ENCODE measurements at regions of chr1 and their contacts with region 1.

Region 1: GRCh38 chr1:115717541-115717940 is 51.0 kb downstream of the CASQ2 start:
- DNase-seq: peak; percentile 62
- ATAC-seq: no peak
- H3K4me3 Mint-ChIP-seq: no peak overlapping the region
- H3K27ac Mint-ChIP-seq: no peak overlapping the region
- H3K4me1 Mint-ChIP-seq: no peaks in the 10 kb centered on the region
- H3K27me3 Mint-ChIP-seq: no peaks in the 10 kb centered on the region

Region 2: DNA sequence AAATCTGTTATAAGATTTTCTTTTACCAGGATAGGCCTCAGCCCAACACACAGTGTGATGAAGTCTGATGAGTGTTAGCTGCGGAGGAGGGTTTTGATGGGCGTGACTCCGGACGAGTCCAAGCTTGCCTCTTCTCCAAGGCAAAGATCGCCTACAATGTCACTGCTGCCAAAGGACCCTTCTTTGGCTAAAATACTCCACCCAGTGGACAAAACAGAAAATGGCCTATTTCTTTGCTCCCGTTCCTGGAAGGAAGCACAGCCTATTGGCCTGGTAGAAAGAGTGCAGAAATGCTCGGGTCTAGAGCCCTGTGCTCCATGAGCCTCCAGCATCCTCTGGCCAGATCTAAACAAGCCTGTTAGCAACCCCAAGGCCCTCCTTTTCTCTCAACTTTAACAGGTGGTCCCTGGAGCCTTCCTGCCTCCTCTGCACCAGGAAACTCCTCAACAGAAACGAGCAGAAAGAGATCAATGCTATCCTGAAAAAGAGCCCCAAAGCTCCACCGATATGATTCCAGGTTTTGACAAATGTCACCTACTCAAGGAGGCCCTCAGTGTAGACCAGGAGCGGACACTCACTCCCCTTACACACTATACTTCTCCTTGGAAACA is 54.4 kb after region 1 on chr1:
- CTCF ChIA-PET with region 1: interaction called, 5 read pairs
- POLR2A ChIA-PET with region 1: no interaction called
- intact Hi-C with region 1: loop called in 1 of 2 experiments (anchors 5 kb)
- DNase-seq: peak; percentile 19
- ATAC-seq: peak; percentile 53
- H3K4me3 Mint-ChIP-seq: no peak overlapping the region
- H3K27ac Mint-ChIP-seq: no peak overlapping the region
- H3K4me1 Mint-ChIP-seq: no peaks in the 10 kb centered on the region
- H3K27me3 Mint-ChIP-seq: peaks cover 5% of the 10 kb centered on the region

Region 3: DNA sequence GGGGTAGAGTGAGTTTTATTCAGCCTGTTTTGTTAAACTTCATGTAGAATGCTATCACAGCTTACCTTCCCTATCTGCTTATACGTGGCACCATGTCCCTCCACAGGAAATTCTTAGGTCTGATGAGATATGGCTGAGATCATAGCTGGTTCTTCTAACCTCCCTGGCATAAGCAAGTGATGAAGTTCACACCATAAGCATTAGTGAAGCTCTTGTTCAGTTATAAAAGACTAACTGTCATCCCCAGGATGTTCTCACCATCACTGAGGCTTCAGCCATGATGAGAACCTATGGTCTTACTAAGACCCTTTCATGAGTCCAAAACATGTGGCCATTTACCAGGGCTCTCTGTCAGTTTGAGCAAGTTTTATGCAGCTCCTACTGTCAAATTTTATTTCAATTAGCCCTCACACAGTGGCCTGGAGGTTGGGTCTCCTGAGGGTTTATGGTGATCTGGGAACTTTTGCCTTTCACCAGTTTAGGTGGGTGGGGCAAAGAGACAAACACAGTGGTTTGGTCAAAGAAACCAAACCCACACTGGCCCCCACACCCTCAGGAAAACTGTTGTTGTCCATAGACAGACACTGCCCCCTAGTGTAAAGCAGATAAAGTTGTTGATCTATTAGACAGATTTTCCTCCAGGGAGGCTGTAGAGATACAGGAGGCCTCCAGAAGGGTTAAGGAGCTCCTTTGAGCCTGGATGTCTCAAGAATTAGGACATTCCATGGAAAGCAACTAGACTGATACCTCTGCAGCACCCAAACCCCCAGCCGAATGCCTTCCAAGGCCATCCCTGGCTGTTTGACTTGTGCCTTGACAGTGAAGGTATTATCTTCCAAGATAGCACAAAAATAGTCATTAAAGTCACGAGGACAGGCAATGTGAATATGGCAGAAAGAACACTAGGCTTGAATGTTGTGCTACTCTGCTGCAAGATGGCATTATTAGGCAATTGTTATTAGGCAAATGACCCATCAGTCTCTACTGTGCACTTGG is 263.8 kb after region 1 on chr1:
- CTCF ChIA-PET with region 1: interaction called, 4 read pairs
- POLR2A ChIA-PET with region 1: no interaction called
- intact Hi-C with region 1: loop called in 1 of 2 experiments (anchors 1 kb)
- DNase-seq: peak; percentile 17
- ATAC-seq: no peak
- H3K4me3 Mint-ChIP-seq: no peak overlapping the region
- H3K27ac Mint-ChIP-seq: no peak overlapping the region
- H3K4me1 Mint-ChIP-seq: no peaks in the 10 kb centered on the region
- H3K27me3 Mint-ChIP-seq: peaks cover 24% of the 10 kb centered on the region